Naive thymus-derived CD4-positive, alpha-beta T cell (primary cell): ENCODE measurements at regions of chr5 and their contacts with region 1.

Region 1: GRCh38 chr5:149551200-149552037 is at the start of gene CSNK1A1:
- DNase-seq: peak; percentile 97 to 99 (median 98)
- ATAC-seq: peak; percentile 93
- H3K4me3 ChIP-seq: peak within 1 kb of the TSS; percentile 97
- H3K4me3 Mint-ChIP-seq: peak within 1 kb of the TSS; percentile 91 to 99 (median 98)
- H3K27ac ChIP-seq: peak within 1 kb of the TSS; percentile 96
- H3K27ac Mint-ChIP-seq: peak within 1 kb of the TSS; percentile 95 to 99 (median 97)
- H3K4me1 ChIP-seq: peaks cover 27 to 31% of the 10 kb centered on the region in 2 donors
- H3K4me1 Mint-ChIP-seq: peaks cover 15 to 36% (median 32%) of the 10 kb centered on the region in 7 donors
- H3K27me3 ChIP-seq: no peaks in the 10 kb centered on the region
- H3K27me3 Mint-ChIP-seq: peaks cover 0 to 5% (median 0%) of the 10 kb centered on the region in 5 donors
- total RNA-seq, gene CSNK1A1: 168 to 217 (median 181) TPM

Region 2: GRCh38 chr5:148805326-148806290 is 745.8 kb before region 1 on chr5:
- CTCF ChIA-PET with region 1: no interaction called
- POLR2A ChIA-PET with region 1: no interaction called
- intact Hi-C with region 1: loop called in 1 of 2 experiments (anchors 5 kb)
- DNase-seq: peak in 1 of 9 donors; percentile 39
- ATAC-seq: peak; percentile 4
- H3K4me3 ChIP-seq: no peak overlapping the region
- H3K4me3 Mint-ChIP-seq: no peak overlapping the region
- H3K27ac ChIP-seq: no peak overlapping the region
- H3K27ac Mint-ChIP-seq: peak overlapping the region in 4 of 9 donors; percentile 13 to 65 (median 28)
- H3K4me1 ChIP-seq: peaks cover 10 to 12% of the 10 kb centered on the region in 2 donors
- H3K4me1 Mint-ChIP-seq: peaks cover 20 to 35% (median 26%) of the 10 kb centered on the region in 7 donors
- H3K27me3 ChIP-seq: no peaks in the 10 kb centered on the region
- H3K27me3 Mint-ChIP-seq: peaks cover 0 to 5% (median 0%) of the 10 kb centered on the region in 5 donors

Region 3: DNA sequence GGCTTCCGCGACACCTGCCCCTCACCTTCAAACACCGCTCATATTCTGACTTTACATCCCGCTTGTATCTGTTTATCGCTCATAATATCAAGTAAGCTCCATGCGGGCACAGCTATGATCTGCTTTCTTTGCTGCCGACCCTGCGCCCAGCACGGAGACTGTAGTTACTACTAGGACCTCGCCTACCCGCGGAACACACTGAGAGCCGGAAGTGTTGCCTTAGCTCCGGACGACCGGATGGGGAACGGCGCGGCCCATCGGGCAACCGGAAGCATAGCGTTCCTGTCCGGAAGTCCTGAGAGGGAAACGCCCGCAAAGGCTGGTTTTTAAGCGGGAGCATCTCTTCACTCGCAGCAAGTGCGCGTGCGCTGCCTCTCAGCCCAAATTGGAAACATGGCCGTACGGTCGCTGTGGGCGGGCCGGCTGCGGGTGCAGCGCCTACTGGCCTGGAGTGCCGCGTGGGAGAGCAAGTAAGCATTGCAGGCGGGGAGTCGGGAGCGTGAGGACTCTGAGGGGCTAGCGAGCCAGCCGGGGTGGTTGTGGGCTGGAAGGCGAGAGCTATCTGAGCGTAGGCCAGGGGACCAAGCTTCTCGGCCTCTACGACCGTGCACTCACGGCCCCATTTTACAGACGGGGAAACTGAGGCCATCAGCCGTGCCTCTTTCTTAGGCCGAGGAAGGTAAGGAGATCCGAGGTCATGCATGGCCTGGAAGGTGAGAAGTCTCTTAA is 206.1 kb before region 1 on chr5 and contains the start of gene GRPEL2:
- CTCF ChIA-PET with region 1: no interaction called
- POLR2A ChIA-PET with region 1: interaction called, 7 read pairs
- intact Hi-C with region 1: loop called (anchors 1 kb)
- DNase-seq: peak; percentile 62 to 90 (median 80)
- ATAC-seq: peak; percentile 78
- H3K4me3 ChIP-seq: peak within 1 kb of the TSS; percentile 90
- H3K4me3 Mint-ChIP-seq: peak within 1 kb of the TSS; percentile 80 to 97 (median 93)
- H3K27ac ChIP-seq: peak within 1 kb of the TSS; percentile 75
- H3K27ac Mint-ChIP-seq: peak within 1 kb of the TSS; percentile 89 to 95 (median 92)
- H3K4me1 ChIP-seq: peaks cover 37 to 43% of the 10 kb centered on the region in 2 donors
- H3K4me1 Mint-ChIP-seq: peaks cover 47 to 69% (median 59%) of the 10 kb centered on the region in 7 donors
- H3K27me3 ChIP-seq: no peaks in the 10 kb centered on the region
- H3K27me3 Mint-ChIP-seq: peaks cover 0 to 1% (median 0%) of the 10 kb centered on the region in 5 donors
- total RNA-seq, gene GRPEL2: 12.0 to 40.1 (median 32.2) TPM

Region 4: DNA sequence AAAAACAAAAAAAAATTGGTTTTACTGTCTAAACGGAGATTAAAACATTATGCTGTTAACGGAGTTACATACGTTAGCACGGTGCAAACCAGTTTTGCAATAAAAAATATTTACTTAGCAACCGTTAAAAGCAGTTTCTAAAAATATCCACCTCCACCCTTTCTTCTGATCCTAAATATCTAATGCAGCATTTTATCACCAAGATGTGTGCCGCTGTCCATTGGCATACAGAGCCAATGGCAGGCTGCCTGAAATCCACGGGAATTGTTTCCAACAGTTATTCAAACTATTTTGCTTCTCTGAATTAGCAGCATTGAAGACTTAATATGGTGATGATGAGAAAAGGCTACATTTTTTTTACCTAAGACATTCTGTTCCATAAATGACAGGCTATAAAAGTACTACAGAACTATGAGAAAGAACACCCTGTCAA is 61.8 kb before region 1 on chr5:
- CTCF ChIA-PET with region 1: no interaction called
- POLR2A ChIA-PET with region 1: no interaction called
- intact Hi-C with region 1: loop called (anchors 10 kb)
- DNase-seq: no peak
- ATAC-seq: no peak
- H3K4me3 ChIP-seq: no peak overlapping the region
- H3K4me3 Mint-ChIP-seq: no peak overlapping the region
- H3K27ac ChIP-seq: no peak overlapping the region
- H3K27ac Mint-ChIP-seq: peak overlapping the region in 3 of 9 donors; percentile 1 to 71 (median 56)
- H3K4me1 ChIP-seq: no peaks in the 10 kb centered on the region
- H3K4me1 Mint-ChIP-seq: peaks cover 0 to 34% (median 9%) of the 10 kb centered on the region in 7 donors
- H3K27me3 ChIP-seq: no peaks in the 10 kb centered on the region
- H3K27me3 Mint-ChIP-seq: no peaks in the 10 kb centered on the region

Region 5: GRCh38 chr5:149561848-149562247 is 10.4 kb after region 1 on chr5:
- CTCF ChIA-PET with region 1: interaction called, 41 read pairs
- POLR2A ChIA-PET with region 1: interaction called, 21 read pairs
- intact Hi-C with region 1: loop called in 1 of 2 experiments (anchors 1 kb)
- DNase-seq: no peak
- ATAC-seq: no peak
- H3K4me3 ChIP-seq: no peak overlapping the region
- H3K4me3 Mint-ChIP-seq: peak overlapping the region in 8 of 10 donors; percentile 4 to 67 (median 56)
- H3K27ac ChIP-seq: peak overlapping the region; percentile 50
- H3K27ac Mint-ChIP-seq: peak overlapping the region; percentile 57 to 84 (median 74)
- H3K4me1 ChIP-seq: peaks cover 0 to 17% of the 10 kb centered on the region in 2 donors
- H3K4me1 Mint-ChIP-seq: peaks cover 14 to 36% (median 25%) of the 10 kb centered on the region in 7 donors
- H3K27me3 ChIP-seq: no peaks in the 10 kb centered on the region
- H3K27me3 Mint-ChIP-seq: no peaks in the 10 kb centered on the region

Region 6: DNA sequence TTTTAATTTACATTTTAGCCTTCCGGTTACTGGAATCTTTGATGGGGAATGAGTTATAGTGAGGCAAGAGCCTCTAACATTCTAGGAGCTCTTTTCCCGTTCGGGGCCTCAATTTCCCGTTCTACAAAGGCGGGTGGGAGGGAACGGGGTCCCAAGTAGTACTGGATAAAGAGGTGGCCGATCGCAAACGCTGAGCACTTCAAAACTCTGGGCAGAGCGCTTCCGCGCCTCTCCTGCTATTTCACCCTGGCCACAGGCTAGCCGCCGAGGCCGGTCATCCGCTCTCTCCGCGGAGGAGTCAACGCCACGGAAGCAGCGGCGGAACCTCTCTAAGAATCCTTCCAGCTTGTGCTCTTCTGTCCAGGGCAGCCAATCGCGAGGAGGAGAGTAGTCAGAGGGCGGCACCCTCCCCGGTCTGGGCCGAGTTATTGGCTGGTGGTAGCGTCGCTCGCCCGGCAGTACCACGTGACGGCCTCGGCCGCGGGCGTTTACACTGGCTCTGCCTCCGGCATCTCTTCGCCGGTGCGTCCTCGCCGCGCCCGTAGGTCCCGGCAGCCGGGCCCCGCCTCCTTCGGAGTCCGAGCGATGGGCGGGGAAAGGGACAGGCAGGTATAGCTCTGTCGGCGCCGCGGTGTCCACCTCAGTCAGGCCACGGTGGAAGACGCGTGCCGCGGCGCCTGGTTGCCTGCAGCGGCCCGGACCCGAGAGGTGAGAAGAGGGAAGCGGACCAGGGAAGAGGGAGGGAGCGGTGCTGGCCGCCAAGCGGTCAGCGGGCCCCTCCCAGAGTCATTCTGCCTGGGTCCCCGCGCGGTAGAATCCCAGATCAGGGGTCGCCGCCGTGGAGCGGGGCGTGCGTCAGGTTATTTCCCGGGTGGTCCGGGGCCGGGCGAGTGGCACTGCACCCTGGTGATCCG is 409.1 kb after region 1 on chr5 and contains the start of gene SLC26A2:
- CTCF ChIA-PET with region 1: no interaction called
- POLR2A ChIA-PET with region 1: interaction called, 5 read pairs
- intact Hi-C with region 1: loop called (anchors 1 to 2 kb)
- DNase-seq: peak; percentile 78 to 92 (median 91)
- ATAC-seq: peak; percentile 99
- H3K4me3 ChIP-seq: peak within 1 kb of the TSS; percentile 98
- H3K4me3 Mint-ChIP-seq: peak within 1 kb of the TSS; percentile 90 to 100 (median 96)
- H3K27ac ChIP-seq: peak within 1 kb of the TSS; percentile 77
- H3K27ac Mint-ChIP-seq: peak within 1 kb of the TSS; percentile 94 to 98 (median 97)
- H3K4me1 ChIP-seq: peaks cover 16 to 28% of the 10 kb centered on the region in 2 donors
- H3K4me1 Mint-ChIP-seq: peaks cover 14 to 43% (median 37%) of the 10 kb centered on the region in 7 donors
- H3K27me3 ChIP-seq: no peaks in the 10 kb centered on the region
- H3K27me3 Mint-ChIP-seq: no peaks in the 10 kb centered on the region
- total RNA-seq, gene SLC26A2: 5.2 to 16.5 (median 9.6) TPM

Region 7: DNA sequence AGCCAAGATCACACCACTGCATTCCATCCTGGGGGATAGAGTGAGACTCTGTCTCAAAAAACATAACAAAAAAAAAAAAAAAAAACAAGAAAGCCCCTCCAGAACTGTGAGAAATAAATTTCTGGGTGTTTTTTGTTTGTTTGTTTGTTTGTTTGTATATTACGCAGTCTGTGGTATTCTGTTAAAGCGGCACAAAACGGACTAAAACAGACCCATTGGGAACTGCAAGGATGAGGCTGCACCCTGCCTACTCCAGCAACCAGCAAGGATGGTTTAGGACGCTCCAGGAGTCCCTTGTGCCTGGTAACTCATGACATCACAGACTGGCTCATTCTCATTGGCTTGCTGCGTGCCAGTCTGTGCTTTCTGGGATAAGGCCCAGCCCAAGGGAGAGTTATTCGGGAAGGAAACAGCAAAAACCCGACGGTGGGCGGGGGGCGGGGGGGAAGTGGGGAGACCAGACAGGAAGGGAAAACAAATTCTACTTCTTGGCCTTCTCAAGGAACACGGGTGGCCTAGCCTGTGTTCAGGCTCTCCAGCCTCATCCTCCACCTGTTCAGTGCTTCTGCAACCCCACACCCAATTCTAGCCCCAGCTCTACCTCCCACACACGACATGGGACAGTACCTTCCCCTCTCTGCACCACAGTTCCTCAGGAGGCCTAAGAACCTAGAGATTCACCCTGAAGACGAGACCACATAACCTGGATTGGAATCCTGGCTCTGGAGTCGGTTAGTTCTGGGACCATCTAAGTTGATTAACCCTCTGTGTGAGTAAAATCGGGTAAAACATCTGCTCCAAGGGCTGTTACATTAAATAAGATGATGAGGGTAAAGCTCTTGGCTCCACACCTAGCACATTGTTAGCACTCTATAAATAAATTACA is 858.5 kb after region 1 on chr5:
- CTCF ChIA-PET with region 1: no interaction called
- POLR2A ChIA-PET with region 1: no interaction called
- intact Hi-C with region 1: loop called in 1 of 2 experiments (anchors 2 kb)
- DNase-seq: peak in 7 of 9 donors; percentile 27 to 48 (median 43)
- ATAC-seq: no peak
- H3K4me3 ChIP-seq: peak overlapping the region; percentile 83
- H3K4me3 Mint-ChIP-seq: peak overlapping the region; percentile 91 to 100 (median 98)
- H3K27ac ChIP-seq: peak overlapping the region; percentile 98
- H3K27ac Mint-ChIP-seq: peak overlapping the region; percentile 96 to 100 (median 100)
- H3K4me1 ChIP-seq: peaks cover 32 to 35% of the 10 kb centered on the region in 2 donors
- H3K4me1 Mint-ChIP-seq: peaks cover 24 to 52% (median 38%) of the 10 kb centered on the region in 7 donors
- H3K27me3 ChIP-seq: no peaks in the 10 kb centered on the region
- H3K27me3 Mint-ChIP-seq: no peaks in the 10 kb centered on the region